Breast epithelium (tissue), 4 donors: ENCODE measurements at regions of chr5 and their contacts with region 1.

Region 1: DNA sequence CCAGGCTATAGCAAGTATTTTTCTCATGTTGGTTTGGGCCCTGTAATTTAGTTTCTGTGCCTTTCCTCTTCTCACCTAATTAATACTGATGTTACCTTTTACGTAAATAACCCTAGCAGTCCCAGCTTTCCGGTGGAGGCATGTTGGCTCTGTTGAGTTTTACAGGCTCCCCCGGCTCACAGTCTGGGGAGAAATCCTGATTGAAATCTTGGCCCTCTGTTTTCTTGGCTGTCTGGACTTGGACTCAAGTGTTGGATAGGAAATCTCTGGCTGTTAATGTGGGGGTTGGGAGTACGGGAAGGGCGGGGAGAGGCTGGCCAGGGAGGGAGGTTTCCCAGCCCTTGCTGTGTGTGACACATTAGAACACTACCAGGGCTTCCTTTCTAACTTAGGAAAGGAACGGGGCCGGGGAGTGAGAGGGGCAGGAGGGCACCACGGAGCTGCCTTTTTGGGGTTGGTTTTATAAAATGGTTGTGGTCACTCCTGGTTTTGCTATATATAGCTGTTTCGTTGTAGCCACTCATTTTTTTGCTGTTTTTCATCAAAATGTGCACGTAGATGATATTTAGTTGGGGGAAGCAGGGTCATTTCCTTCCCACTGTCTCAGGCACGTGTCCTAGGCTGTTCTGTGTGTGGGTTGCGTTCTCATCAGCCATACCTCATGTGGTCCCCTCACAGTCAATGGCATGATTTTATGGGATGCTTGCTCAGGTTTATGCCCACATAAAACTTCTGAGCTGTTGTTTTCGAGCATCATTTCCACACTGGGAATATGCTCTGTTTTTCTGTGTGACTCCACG is 11.0 kb downstream of the TRIO start:
- DNase-seq: peak; percentile 51 to 66
- H3K4me3 ChIP-seq: peak overlapping the region in 1 of 3 donors; percentile 48
- H3K27ac ChIP-seq: peak overlapping the region; percentile 81 to 85
- H3K4me1 ChIP-seq: peaks cover 0 to 17% of the 10 kb centered on the region in 2 donors
- H3K27me3 ChIP-seq: no peaks in the 10 kb centered on the region
- CTCF ChIP-seq: no peak
- POLR2A ChIP-seq: no peak

Region 2: DNA sequence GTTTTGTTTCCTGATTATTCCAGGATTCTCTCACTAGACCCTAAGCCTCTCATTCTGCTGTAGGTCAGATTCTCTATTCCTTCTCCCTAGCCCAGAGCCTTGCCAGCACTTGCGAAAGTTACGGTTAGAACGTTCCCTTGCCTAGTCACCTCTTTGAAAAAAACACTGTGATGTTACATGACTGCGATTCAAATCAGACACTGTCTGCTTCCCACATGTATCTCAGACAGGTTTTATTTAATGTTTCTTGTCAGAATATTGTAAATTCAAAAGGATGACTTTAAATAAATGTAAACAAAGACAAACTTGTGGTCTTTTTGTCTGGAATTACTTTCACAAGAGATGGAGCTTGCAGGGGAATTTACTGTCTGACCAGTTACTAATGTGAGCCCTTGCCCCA is 311.0 kb after region 1 on chr5:
- intact Hi-C with region 1: no loop called
- DNase-seq: no peak
- H3K4me3 ChIP-seq: no peak overlapping the region
- H3K27ac ChIP-seq: no peak overlapping the region
- H3K4me1 ChIP-seq: no peaks in the 10 kb centered on the region
- H3K27me3 ChIP-seq: no peaks in the 10 kb centered on the region
- CTCF ChIP-seq: no peak
- POLR2A ChIP-seq: no peak

Region 3: DNA sequence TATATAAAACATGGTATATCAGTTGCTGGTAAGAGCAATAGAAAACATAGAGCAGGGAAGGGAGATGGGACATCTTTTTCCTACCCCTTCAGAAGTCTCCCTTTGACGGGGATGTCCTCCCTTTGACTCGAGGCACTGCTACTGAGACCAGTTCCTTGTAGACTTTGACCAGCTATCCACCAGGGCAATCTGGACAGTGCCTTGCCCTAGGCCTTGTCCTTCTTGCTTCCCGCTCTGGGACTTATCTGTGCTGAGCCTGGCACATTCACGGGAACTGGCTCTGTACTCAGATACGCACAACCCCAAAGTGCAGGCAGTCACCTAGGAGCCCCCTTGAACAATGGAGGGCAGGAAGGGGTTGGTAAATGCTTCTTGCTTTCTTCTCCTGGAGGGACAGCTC is 834.1 kb after region 1 on chr5:
- intact Hi-C with region 1: loop called (anchors 5 kb)
- DNase-seq: no peak
- H3K4me3 ChIP-seq: no peak overlapping the region
- H3K27ac ChIP-seq: no peak overlapping the region
- H3K4me1 ChIP-seq: no peaks in the 10 kb centered on the region
- H3K27me3 ChIP-seq: no peaks in the 10 kb centered on the region
- CTCF ChIP-seq: no peak
- POLR2A ChIP-seq: no peak